ENCODE measurements at regions of chr9 and their contacts with region 1.

Region 1: DNA sequence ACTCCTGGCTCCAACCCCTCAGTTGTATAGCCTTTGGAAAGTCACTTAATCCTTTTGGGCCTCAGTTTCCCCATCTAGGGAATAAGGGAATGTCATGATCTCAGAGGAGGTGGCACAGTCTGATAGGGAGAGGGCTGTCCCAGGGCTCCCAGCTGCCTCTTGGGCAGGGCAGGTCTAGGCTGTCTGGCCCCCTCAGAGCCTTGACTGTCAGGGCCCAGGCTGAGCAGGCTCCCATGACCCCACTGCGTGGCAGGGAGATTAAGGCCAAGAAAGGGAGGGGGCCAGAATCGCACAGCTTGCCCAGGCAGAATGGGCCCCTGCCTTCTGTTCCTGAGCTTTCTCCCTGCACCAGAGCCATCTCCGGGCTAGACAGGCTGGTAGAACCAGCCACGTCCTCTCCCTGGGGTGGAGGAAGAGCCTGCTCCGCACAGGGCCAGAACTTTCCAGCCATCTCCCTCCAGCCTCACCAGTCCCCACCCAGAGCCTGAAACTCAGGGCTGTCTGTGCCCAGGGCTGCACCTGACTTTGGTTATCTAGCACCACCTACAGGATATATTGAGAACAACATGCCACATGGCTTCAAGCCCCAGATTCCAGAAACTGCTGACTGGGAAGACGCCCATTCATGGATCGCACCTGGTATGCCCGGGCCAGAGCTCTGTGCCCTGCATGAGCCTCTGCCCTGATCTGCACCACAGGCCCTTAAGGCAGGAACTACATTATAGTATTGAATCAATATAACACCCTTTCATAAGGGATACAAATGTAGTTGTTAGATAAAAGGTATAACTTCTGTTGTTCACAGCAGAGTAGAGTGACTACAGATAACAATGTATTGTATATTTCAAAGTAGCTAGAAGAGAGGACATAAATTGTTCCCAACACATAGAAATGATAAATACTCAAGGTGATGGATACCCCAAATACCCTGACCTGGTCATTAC is 32.0 kb downstream of the NAIF1 start:
- DNase-seq: peak; percentile 44 to 71
- ATAC-seq: peak; percentile 93 to 98 (median 94)
- H3K4me3 ChIP-seq: no peak overlapping the region
- H3K27ac ChIP-seq: peak overlapping the region in 2 of 10 donors; percentile 21 to 25
- H3K4me1 ChIP-seq: peaks cover 0 to 10% (median 4%) of the 10 kb centered on the region in 9 donors
- H3K27me3 ChIP-seq: no peaks in the 10 kb centered on the region
- CTCF ChIP-seq: peak; percentile 69 to 90 (median 87)

Region 2: GRCh38 chr9:127707726-127708147 is 327.4 kb before region 1 on chr9:
- intact Hi-C with region 1: no loop called
- DNase-seq: no peak
- ATAC-seq: no peak
- H3K4me3 ChIP-seq: no peak overlapping the region
- H3K27ac ChIP-seq: no peak overlapping the region
- H3K4me1 ChIP-seq: no peaks in the 10 kb centered on the region
- H3K27me3 ChIP-seq: no peaks in the 10 kb centered on the region
- CTCF ChIP-seq: peak in 1 of 9 donors; percentile 18

Region 3: GRCh38 chr9:128117613-128118471 is 82.7 kb after region 1 on chr9:
- intact Hi-C with region 1: loop called in 3 of 10 experiments (anchors 2 to 5 kb)
- DNase-seq: peak; percentile 93 to 98
- ATAC-seq: peak; percentile 42 to 85 (median 72)
- H3K4me3 ChIP-seq: peak overlapping the region in 1 of 10 donors; percentile 28
- H3K27ac ChIP-seq: peak overlapping the region in 1 of 10 donors; percentile 6
- H3K4me1 ChIP-seq: peaks cover 0 to 12% (median 8%) of the 10 kb centered on the region in 9 donors
- H3K27me3 ChIP-seq: no peaks in the 10 kb centered on the region
- CTCF ChIP-seq: peak; percentile 100